GM10248 (cell line): ENCODE measurements at regions of chr9 and their contacts with region 1.

Region 1: DNA sequence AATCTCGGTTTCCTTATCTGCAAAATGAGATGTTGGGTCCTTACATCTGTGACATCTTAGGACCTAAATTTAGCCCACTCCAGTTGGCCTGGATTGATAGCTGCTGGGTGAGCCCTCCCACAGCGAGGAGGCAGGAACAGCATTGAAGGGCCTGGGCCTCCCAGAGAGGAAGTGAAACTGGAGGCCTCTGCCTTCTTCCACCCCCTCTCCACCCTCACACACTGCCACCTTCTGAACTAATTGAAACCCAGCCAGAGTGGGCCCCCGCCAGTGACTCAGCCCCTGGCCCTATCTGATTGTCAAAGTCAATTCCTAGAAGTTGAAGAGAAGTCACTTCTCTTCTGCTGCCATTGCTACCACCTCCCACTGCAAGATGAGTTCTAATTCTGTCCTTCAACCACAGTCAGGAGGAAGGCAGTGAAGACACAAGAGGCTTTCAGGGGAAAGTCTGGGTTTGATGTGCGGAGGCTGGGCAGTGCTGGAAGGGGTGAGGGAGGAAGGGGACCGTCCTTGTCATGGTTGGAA is 55.2 kb upstream of the NEK6 start:
- DNase-seq: peak; percentile 81
- CTCF ChIP-seq: no peak

Region 2: GRCh38 chr9:123975871-123976270 is 226.6 kb before region 1 on chr9:
- CTCF ChIA-PET with region 1: no interaction called
- POLR2A ChIA-PET with region 1: no interaction called
- DNase-seq: no peak
- CTCF ChIP-seq: no peak

Region 3: DNA sequence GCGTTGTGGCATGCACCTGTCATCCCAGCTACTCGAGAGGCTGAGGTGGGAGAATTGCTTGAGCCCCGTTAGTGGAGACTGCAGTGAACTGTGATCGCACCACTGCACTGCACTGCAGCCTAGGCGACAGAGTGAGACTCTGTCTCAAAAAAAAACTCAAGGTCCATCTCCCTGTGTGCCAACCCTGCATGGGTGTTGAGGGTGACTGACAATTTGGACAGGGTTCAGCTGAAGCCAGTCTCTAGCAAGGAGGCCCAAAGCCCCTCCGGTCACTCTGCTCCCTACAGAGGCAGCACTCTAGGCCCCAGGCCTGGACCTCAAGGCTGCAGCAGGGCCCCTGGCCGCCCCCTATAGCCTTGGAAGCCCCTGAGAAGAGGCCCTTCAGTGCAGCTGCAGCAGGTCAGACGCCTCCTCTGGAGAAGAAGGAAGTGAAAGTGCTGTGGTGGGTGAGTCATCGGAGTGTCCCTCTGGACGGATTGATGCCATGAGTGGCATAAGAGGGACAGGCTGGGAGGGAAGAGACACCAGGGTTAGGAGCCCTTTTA is 16.0 kb after region 1 on chr9:
- CTCF ChIA-PET with region 1: interaction called, 11 read pairs
- POLR2A ChIA-PET with region 1: interaction called, 3 read pairs
- DNase-seq: peak; percentile 85
- CTCF ChIP-seq: no peak